PC-9 (cell line): ENCODE measurements at regions of chr17 and their contacts with region 1.

Region 1: DNA sequence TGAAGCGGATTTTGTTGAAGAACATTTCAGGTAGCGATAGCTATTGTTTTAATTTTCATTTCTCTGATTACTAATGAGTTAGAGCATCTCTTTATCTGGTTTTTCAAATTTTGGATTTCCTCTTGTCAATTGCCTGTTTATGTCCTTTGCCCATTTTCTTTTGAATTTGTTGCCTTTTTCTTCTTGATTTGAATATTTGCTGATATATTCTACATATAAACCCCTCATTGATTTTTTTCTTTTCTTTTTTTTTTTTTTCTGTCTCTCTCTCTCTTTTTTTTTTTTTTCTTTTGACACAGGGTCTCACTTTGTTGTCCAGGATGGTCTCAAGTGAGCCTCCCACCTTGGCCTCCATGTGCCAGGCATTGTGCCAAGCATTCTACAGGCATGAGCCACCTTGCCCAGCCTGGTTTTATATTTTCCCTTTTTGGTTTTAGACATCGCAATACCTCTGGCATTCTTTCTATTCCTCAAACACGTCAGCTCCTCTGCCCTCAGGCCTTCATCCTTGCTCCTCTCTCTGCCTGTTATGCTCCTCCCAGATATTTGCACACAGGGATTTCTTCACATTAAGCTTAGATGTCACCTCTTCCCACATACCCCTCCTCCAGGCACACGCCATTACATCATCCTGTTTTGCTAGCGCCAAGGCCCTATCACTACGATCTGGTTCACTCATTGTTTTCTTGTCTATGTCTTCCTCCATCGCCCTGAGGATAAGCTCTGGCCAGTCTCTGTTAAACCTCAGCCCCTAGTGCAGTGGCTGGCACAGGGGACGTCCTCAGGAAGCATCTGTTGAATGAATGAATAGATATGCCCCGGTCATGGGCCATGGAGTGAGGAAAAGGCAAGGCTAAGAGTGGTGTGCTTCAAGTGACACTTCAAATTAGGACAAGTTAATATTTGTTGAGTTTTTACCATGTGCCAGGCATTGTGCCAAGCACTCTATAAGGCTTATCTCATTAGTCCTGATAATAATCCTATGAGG is 8.6 kb downstream of the SARM1 start:
- DNase-seq: peak; percentile 80 to 97
- H3K4me3 ChIP-seq: no peak overlapping the region
- H3K27ac ChIP-seq: peak overlapping the region; percentile 86
- H3K4me1 ChIP-seq: peaks cover 26% of the 10 kb centered on the region
- H3K27me3 ChIP-seq: no peaks in the 10 kb centered on the region
- CTCF ChIP-seq: no peak

Region 2: DNA sequence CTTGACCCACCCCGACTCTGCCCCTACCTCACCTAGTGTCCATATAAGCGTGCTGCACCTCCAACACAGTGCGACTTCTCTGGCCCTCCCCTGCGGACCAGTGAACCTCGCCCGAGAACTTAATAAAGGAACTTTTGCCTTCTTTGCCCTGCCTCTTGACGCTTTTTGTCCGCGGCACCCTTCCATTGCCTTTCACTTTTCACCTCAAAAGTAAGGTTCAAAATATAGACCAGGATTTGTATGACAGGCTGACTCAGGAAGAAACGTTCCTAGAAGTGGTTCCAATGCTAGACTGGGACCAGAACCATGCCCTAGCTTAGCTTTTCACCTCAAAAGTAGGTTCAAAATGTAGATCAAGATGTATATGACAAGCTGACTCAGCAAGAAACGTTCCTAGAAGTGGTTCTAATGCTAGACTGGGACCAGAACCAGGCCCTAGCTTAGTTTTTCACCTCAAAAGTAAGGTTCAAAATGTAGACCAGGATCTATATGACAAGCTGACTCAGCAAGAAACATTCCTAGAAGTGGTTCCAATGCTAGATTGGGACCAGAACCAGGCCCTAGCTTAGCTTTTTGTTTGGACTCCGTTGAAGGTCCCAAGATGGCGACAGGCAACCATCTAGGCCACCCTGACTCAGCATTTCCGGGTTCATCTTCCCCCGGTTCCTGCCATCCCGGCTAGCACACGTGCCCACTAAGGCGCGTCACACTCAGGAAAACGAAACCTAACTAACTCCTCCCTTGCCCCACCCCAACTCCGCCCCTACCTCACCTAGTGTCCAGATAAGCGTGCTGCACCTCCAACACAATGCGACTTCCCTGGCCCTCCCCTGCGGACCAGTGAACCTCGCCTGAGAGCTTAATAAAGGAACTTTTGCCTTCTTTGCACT is 112.1 kb before region 1 on chr17:
- CTCF ChIA-PET with region 1: no interaction called
- POLR2A ChIA-PET with region 1: no interaction called
- intact Hi-C with region 1: no loop called
- DNase-seq: no peak
- H3K4me3 ChIP-seq: no peak overlapping the region
- H3K27ac ChIP-seq: no peak overlapping the region
- H3K4me1 ChIP-seq: no peaks in the 10 kb centered on the region
- H3K27me3 ChIP-seq: peaks cover 31% of the 10 kb centered on the region
- CTCF ChIP-seq: no peak

Region 3: GRCh38 chr17:28346746-28347246 is 33.3 kb before region 1 on chr17:
- CTCF ChIA-PET with region 1: no interaction called
- POLR2A ChIA-PET with region 1: no interaction called
- intact Hi-C with region 1: loop called (anchors 1 kb)
- DNase-seq: no peak
- H3K4me3 ChIP-seq: no peak overlapping the region
- H3K27ac ChIP-seq: peak overlapping the region; percentile 72
- H3K4me1 ChIP-seq: peaks cover 26% of the 10 kb centered on the region
- H3K27me3 ChIP-seq: no peaks in the 10 kb centered on the region
- CTCF ChIP-seq: peak; percentile 35; the same call in 1 of the 2 replicates